ENCODE measurements at regions of chr14 and their contacts with region 1.

Region 1: DNA sequence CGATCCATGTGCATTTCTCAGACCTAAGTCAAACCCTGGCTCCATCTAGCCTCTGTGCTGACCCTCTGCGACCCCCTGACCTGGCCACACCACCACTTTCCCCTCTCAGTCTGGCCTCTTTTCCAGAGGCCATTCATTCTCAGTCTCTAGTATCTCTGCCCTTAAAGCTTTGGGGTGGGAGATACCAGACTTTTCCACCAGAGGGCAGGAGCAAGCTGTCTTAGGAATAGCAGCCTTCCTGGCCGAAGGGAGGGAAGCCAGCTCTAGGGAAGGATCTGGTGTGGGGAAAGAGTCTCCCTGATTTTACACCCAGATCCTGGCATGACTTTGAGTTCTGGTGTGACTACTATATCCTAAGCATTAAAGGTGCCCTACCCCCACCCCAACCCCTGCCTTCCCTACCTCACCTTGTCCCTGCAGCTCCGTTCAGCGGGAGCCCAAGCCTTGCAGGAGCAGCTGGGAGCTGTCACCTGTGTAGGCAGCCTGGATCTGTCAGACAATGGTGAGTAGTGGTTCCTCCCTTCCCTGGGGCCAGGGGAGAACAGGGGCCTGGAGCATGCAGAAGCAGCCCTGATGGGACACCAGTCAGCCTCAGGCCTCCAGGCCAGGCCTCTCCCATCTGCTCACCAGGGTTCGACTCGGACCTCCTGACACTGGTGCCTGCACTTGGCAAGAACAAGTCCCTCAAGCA is 6.6 kb downstream of the CARMIL3 start:
- DNase-seq: peak in 1 of 2 experiments; percentile 70
- H3K4me3 ChIP-seq: no peak overlapping the region
- H3K27ac ChIP-seq: no peak overlapping the region
- H3K4me1 ChIP-seq: no peaks in the 10 kb centered on the region
- H3K27me3 ChIP-seq: peaks cover 24% of the 10 kb centered on the region
- CTCF ChIP-seq: peak; percentile 84

Region 2: DNA sequence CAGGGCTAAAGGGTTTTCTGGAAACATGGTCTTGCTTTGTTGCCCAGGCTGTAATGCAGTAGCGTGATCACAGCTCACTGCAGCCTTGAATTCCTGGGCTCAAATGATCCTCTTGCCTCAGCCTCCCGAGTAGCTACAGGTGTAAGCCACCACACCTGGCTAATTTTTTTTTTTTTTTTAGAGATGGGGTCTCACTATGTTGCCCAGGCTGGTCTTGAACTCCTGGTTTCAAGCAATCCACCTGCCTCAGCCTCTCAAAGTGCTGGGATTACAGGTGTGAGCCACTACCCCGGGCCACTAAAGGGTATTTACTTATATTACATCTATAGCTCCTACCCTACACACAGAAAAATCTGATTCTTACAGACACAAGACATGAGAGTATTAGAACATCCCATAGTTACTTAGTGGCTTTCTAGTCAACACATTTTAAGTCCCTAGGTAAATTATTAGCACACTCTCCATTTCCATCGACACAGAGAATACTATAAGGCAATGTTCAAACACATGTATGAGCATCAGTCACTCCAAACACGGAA is 50.0 kb after region 1 on chr14:
- CTCF ChIA-PET with region 1: interaction called, 14 read pairs
- POLR2A ChIA-PET with region 1: no interaction called
- intact Hi-C with region 1: loop called (anchors 1 kb)
- DNase-seq: no peak
- H3K4me3 ChIP-seq: no peak overlapping the region
- H3K27ac ChIP-seq: no peak overlapping the region
- H3K4me1 ChIP-seq: peaks cover 21% of the 10 kb centered on the region
- H3K27me3 ChIP-seq: no peaks in the 10 kb centered on the region
- CTCF ChIP-seq: no peak

Region 3: DNA sequence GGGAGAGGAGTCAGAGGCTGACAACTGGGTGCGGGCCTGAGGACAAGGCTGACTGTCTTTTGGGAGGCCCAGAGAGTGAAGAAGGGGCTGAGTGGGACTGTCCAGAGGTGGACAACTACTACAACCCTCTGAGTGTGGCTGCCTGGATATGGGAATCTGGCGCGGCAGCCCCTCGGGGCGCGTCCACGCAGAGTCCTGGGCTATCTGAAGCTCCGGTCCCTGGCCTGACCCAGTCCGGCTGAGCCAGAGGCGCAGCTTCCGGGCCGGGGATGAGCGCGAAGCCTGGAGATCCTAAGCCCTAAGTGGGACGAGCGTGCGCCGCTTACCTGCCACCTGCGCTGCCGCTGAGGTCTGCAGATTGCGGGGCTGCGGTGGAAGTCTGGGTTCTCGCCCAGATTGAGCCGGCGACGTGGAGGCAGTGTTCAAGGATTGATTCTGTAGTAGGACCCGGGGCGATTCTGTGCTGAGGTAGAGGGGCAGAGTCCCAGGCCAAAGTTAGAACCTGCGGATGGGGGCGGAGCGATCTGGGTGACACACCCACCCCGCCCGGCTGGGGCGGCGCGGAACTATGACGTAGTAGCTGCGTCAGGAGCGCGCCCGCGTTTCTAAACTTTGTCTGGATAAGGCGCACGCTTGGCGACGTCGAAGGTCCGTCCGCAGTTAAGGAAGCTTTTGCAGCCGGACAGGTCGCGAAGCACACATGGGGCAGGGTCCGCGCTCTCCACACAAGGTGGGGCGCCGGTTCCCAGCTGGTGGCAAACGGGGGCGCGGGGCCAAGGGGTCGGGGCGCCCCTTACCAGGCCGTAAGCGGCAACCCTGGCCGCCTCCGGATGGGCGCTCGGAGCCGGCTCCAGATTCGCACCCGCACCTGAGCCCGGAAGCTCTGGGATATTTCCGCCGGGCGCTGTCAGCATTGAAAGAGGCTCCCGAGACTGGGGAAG is 241.1 kb after region 1 on chr14 and contains the starts of genes DHRS1 and NOP9:
- CTCF ChIA-PET with region 1: no interaction called
- POLR2A ChIA-PET with region 1: interaction called, 3 read pairs
- intact Hi-C with region 1: loop called (anchors 1 kb)
- DNase-seq: peak; percentile 68 to 86
- H3K4me3 ChIP-seq: peak within 1 kb of the TSS; percentile 88
- H3K27ac ChIP-seq: peak within 1 kb of the TSS; percentile 53
- H3K4me1 ChIP-seq: peaks cover 16% of the 10 kb centered on the region
- H3K27me3 ChIP-seq: no peaks in the 10 kb centered on the region
- CTCF ChIP-seq: no peak
- total RNA-seq, gene DHRS1: 37.9 and 41.4 TPM in 2 replicates
- total RNA-seq, gene NOP9: 24.4 and 31.1 TPM in 2 replicates